Left ventricle myocardium superior (tissue), 1 donor: ENCODE measurements at regions of chr6 and their contacts with region 1.

Region 1: GRCh38 chr6:75526502-75527127 is 33.0 kb upstream of the FILIP1 start:
- DNase-seq: no peak
- ATAC-seq: peak; percentile 90

Region 2: DNA sequence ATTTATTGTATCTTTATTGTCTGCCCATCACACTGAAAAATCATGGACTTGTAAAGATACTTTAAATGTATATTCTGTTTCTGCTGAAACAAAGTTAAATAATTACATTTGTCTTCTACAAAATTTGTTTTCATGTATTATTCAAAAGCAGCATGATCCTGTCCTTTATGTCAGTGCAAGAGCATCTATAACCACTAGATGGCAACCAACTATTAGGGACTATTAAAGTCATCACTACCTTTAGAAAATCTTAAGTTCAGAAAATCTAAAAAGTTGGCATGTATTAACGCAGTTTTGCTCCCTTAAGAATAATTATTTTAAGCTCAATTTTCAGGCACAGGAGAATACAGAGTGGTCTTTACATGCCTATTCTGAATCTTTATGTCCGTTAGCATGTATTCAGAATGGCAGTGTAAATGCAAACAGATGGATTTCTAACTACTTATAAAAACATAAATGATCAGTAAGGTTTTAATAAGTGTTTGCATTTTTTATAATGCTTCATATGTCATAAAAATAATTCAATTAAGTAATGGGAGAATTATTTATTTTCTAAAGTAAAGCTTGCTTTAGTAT is 259.8 kb before region 1 on chr6:
- intact Hi-C with region 1: loop called (anchors 2 kb)
- DNase-seq: no peak
- ATAC-seq: peak; percentile 71

Region 3: DNA sequence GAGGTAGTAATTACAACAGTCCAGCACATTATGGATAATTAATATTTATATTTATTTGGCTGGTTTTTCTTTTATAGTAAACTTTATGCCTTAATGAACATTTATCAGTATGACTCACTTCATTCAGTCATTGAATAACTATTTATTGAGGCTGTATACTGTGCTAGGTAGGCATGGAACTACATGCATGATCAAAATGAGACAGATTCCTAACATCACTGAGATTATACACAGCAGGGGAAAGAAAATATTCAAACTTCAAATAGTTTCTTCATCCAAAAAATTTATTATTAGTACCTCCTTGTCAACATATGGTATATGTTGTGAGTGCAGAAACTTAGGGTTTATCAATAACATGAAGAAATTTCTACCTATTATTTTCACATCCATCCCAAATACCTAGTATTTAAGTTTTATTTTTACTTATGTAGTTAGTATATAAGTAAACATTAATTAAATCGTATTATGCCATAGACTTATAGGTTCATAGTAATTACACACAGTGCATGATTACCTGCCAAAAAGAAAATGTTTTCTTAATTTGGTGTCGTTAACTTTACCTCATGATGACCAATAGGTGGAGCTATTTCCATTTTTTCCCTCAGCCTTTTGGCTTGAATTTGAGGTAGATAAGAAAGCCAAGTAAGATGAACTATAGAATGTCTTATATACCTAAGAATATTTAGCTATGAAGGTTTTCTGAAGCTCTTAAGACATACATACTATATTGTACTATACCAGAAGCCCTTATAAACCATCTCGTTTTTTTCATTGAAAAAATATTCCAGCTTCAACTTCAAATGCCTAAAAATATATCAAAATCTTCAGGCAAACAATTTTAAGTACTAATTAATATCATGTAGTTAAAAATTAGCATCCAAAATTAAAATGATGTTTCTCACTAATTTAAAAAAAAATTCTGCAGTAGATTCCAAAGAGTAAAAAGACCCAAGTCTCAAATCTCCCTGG is 229.5 kb before region 1 on chr6:
- intact Hi-C with region 1: loop called (anchors 10 kb)
- DNase-seq: no peak
- ATAC-seq: peak; percentile 43